ENCODE measurements at regions of chr1 and their contacts with region 1.

Region 1: DNA sequence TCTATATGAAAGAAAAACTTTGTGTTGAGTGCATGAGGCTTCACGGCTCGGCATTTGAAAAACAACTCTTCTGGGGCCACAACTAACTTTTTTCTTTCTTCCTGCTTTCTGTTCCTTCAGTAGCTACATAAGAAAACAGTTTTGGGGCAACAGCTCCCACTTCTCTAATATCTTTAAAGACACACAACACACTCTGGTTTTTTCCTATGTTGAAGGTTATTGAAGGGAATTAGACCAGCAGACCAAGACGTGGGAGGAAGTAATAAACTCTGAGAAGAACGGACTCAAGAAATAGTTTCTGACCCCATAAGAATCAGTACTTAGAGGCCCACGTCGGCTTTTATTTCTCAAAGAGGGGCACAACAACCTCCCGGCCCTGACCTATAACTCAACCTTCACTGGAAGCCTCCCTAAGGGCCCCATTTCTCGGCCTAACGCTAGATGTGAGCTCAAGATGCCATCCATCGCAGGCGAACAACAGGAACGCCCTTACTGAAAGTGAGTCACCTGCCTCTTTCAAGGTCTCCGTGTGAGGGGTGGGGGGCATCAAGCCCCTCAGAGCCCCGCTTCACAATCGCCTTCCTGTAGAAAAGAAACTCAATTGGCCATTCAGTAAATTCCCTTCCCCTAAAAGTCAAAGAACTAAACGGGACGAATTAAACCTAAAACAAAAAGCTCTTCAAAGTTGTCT is 844 bp downstream of the ZMYM6 start:
- DNase-seq: peak; percentile 10 to 55 (median 30)
- ATAC-seq: peak; percentile 52
- H3K4me3 ChIP-seq: peak overlapping the region; percentile 92
- H3K4me3 Mint-ChIP-seq: peak overlapping the region; percentile 98
- H3K27ac ChIP-seq: peak overlapping the region; percentile 66 to 73
- H3K27ac Mint-ChIP-seq: peak overlapping the region; percentile 89
- H3K4me1 ChIP-seq: peaks cover 26% of the 10 kb centered on the region
- H3K4me1 Mint-ChIP-seq: peaks cover 47% of the 10 kb centered on the region
- H3K27me3 ChIP-seq: no peaks in the 10 kb centered on the region
- H3K27me3 Mint-ChIP-seq: no peaks in the 10 kb centered on the region
- CTCF ChIP-seq: no peak

Region 2: GRCh38 chr1:34865981-34866761 is 164.7 kb before region 1 on chr1:
- CTCF ChIA-PET with region 1: no interaction called
- POLR2A ChIA-PET with region 1: no interaction called
- intact Hi-C with region 1: loop called in 1 of 2 experiments (anchors 5 kb)
- DNase-seq: peak; percentile 81 to 98 (median 92)
- ATAC-seq: peak; percentile 85
- H3K4me3 ChIP-seq: peak overlapping the region; percentile 62
- H3K4me3 Mint-ChIP-seq: peak overlapping the region; percentile 89
- H3K27ac ChIP-seq: peak overlapping the region; percentile 55 to 73
- H3K27ac Mint-ChIP-seq: peak overlapping the region; percentile 82
- H3K4me1 ChIP-seq: peaks cover 54% of the 10 kb centered on the region
- H3K4me1 Mint-ChIP-seq: peaks cover 49% of the 10 kb centered on the region
- H3K27me3 ChIP-seq: peaks cover 0 to 4% of the 10 kb centered on the region in 2 experiments
- H3K27me3 Mint-ChIP-seq: no peaks in the 10 kb centered on the region
- CTCF ChIP-seq: peak; percentile 97

Region 3: DNA sequence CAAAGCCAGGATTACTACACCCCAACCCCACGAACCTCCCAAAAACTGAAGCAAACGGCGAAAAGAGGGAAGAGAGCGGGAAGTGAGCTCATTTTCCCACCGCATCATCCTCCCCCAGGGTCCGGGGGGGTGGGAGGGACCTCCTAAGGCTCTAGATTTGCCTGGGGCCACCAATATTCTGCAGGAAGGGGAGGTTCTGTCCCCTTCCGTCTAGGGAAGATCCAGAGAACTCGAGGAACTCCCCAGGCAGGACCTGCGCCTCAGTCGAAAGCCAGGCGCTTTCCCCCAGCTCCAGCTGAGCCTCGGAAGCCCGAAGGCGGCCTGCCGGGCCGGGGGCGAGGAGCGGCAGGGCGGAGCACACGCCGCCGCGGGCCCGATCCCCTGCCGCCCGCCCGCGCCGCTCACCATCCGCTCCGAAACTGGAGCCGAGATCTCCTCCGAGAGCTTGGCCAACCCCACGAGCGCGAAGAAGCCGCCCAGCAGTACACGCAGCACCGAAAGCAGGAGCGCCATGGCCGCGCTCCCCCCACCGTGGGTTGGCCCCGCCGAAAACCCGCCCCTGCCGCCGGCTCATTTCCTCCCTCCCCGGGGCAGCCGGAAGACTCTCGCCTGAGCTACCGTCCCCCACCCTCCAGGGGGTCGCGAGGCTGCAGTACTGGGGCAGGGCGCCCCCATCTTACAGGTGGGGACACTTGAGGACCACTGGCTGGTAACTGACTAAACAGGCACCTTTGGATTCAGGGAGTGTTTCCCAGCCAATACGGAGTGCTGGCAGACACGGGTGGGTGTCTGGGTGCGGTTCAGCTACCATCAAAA is 45.9 kb before region 1 on chr1 and contains the start of gene TMEM35B:
- CTCF ChIA-PET with region 1: interaction called, 9 read pairs
- POLR2A ChIA-PET with region 1: interaction called, 28 read pairs
- intact Hi-C with region 1: loop called in 1 of 2 experiments (anchors 2 kb)
- DNase-seq: peak; percentile 64 to 88 (median 78)
- ATAC-seq: peak; percentile 97
- H3K4me3 ChIP-seq: peak within 1 kb of the TSS; percentile 65
- H3K4me3 Mint-ChIP-seq: peak within 1 kb of the TSS; percentile 97
- H3K27ac ChIP-seq: peak within 1 kb of the TSS; percentile 76 to 77
- H3K27ac Mint-ChIP-seq: peak within 1 kb of the TSS; percentile 87
- H3K4me1 ChIP-seq: peaks cover 41% of the 10 kb centered on the region
- H3K4me1 Mint-ChIP-seq: peaks cover 39% of the 10 kb centered on the region
- H3K27me3 ChIP-seq: no peaks in the 10 kb centered on the region
- H3K27me3 Mint-ChIP-seq: no peaks in the 10 kb centered on the region
- CTCF ChIP-seq: peak; percentile 33
- total RNA-seq, gene TMEM35B: 0.85 to 2.3 TPM

Region 4: GRCh38 chr1:35079003-35079930 is 48.4 kb after region 1 on chr1 and contains the start of gene ZMYM1:
- CTCF ChIA-PET with region 1: no interaction called
- POLR2A ChIA-PET with region 1: interaction called, 11 read pairs
- intact Hi-C with region 1: loop called (anchors 2 kb)
- DNase-seq: peak; percentile 66 to 88 (median 76)
- ATAC-seq: peak; percentile 86
- H3K4me3 ChIP-seq: peak within 1 kb of the TSS; percentile 73
- H3K4me3 Mint-ChIP-seq: peak within 1 kb of the TSS; percentile 99
- H3K27ac ChIP-seq: peak within 1 kb of the TSS; percentile 75 to 86
- H3K27ac Mint-ChIP-seq: peak within 1 kb of the TSS; percentile 99
- H3K4me1 ChIP-seq: peaks cover 23% of the 10 kb centered on the region
- H3K4me1 Mint-ChIP-seq: peaks cover 39% of the 10 kb centered on the region
- H3K27me3 ChIP-seq: no peaks in the 10 kb centered on the region
- H3K27me3 Mint-ChIP-seq: peaks cover 9% of the 10 kb centered on the region
- CTCF ChIP-seq: no peak
- total RNA-seq, gene ZMYM1: 6.3 to 6.7 TPM

Region 5: GRCh38 chr1:35210321-35211119 is 179.6 kb after region 1 on chr1:
- CTCF ChIA-PET with region 1: no interaction called
- POLR2A ChIA-PET with region 1: no interaction called
- intact Hi-C with region 1: no loop called
- DNase-seq: no peak
- ATAC-seq: no peak
- H3K4me3 ChIP-seq: no peak overlapping the region
- H3K4me3 Mint-ChIP-seq: no peak overlapping the region
- H3K27ac ChIP-seq: no peak overlapping the region
- H3K27ac Mint-ChIP-seq: no peak overlapping the region
- H3K4me1 ChIP-seq: no peaks in the 10 kb centered on the region
- H3K4me1 Mint-ChIP-seq: no peaks in the 10 kb centered on the region
- H3K27me3 ChIP-seq: no peaks in the 10 kb centered on the region
- H3K27me3 Mint-ChIP-seq: no peaks in the 10 kb centered on the region
- CTCF ChIP-seq: no peak

Region 6: DNA sequence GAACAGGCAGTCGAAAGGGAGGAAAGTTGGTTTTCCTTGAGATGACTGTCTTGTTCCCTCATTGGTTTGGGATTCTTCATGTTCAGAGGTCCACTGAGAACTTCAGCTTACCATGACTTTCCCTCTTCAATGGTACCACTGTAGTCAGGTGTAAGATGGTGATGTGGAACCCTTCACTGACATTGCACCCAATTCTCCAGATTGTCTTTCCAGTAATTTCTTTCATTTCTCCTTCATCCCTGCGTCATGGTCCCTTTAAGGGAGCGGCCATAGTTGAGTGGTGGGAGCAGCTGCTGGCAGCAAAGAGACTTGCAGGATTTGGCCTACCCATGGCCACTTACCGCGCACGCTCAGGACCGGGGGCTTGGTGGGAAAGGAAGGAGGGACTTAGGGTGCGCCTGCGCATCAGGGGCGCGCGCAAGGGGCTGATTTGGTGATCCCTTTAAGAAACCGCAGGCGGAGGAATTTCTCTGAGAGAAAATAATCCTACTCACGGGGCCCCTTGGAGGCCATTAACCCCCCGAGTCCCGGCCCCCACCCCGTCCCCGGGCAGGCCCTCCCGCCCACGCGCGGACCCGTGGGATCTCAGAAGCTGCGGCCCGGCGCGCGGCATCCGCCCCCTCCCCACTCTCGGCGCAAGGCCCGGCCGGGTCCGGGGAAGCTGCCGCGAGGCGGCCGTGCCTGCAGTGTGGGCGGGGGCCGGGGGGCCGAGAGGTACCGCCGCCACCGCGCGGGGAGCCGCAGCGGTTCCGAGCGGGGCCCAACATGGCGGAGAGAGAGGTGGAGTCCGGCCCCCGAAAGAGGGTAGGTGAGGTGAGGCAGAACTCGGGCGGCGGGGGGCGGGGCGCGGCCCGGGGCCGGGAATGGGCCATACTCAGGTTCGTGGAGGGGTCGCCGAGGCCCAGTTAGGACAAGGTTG is 237.6 kb after region 1 on chr1 and contains the start of gene ZMYM4:
- CTCF ChIA-PET with region 1: no interaction called
- POLR2A ChIA-PET with region 1: interaction called, 5 read pairs
- intact Hi-C with region 1: loop called in 1 of 2 experiments (anchors 1 kb)
- DNase-seq: peak; percentile 74 to 96 (median 86)
- ATAC-seq: peak; percentile 95
- H3K4me3 ChIP-seq: peak within 1 kb of the TSS; percentile 71
- H3K4me3 Mint-ChIP-seq: peak within 1 kb of the TSS; percentile 98
- H3K27ac ChIP-seq: peak within 1 kb of the TSS in 1 of 2 donors; percentile 55
- H3K27ac Mint-ChIP-seq: peak within 1 kb of the TSS; percentile 87
- H3K4me1 ChIP-seq: peaks cover 6% of the 10 kb centered on the region
- H3K4me1 Mint-ChIP-seq: peaks cover 41% of the 10 kb centered on the region
- H3K27me3 ChIP-seq: peaks cover 0 to 3% of the 10 kb centered on the region in 2 experiments
- H3K27me3 Mint-ChIP-seq: peaks cover 9% of the 10 kb centered on the region
- CTCF ChIP-seq: no peak
- total RNA-seq, gene ZMYM4: 37.0 to 39.9 TPM

Measured in CD4-positive, alpha-beta T cell (primary cell).